AG04450 (cell line): ENCODE measurements at regions of chr1 and their contacts with region 1.

Region 1: DNA sequence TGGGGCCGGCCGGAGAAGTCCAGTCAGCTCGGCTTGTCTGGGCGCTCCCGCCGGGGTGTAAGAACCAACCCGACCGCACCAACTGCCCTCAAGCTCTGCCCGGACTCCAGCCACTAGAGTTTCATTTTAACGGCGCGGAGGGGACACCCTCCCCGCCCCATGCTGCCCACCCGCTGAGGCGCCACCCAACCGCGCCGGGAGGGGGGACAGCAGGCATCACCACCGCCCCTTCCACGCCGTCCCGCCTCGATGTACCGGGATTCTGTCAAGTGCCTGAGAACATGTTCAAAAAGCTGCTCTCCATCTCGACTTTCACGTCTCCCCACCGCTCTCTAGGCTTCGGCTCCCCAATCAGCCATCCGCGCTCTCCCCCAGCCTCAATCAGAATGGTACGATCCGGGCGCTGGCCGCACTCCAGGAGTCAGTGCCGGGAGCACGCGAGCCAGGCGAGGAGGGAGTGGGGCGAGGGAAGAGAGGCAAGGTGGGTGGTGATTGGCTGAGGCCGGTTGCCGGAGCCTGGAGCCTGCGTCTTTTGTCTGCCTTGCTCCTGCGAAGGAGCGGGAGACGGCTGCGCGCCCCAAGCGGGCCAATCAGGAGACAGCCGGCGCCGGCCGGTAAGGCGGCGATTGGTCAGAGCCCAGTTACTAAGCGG is at the start of gene PIK3R3:
- DNase-seq: peak; percentile 99
- H3K4me3 ChIP-seq: peak within 1 kb of the TSS; percentile 80
- H3K27ac ChIP-seq: peak within 1 kb of the TSS; percentile 99
- H3K27me3 ChIP-seq: no peaks in the 10 kb centered on the region
- CTCF ChIP-seq: no peak
- polyA plus RNA-seq, gene PIK3R3: 11.3 and 14.5 TPM in 2 replicates

Region 2: GRCh38 chr1:46186076-46186475 is 53.4 kb after region 1 on chr1:
- CTCF ChIA-PET with region 1: interaction called, 6 read pairs
- POLR2A ChIA-PET with region 1: interaction called, 10 read pairs
- DNase-seq: no peak
- H3K4me3 ChIP-seq: no peak overlapping the region
- H3K27ac ChIP-seq: no peak overlapping the region
- H3K27me3 ChIP-seq: no peaks in the 10 kb centered on the region
- CTCF ChIP-seq: no peak

Region 3: GRCh38 chr1:46549697-46550681 is 417.3 kb after region 1 on chr1:
- CTCF ChIA-PET with region 1: no interaction called
- POLR2A ChIA-PET with region 1: no interaction called
- DNase-seq: no peak
- H3K4me3 ChIP-seq: no peak overlapping the region
- H3K27ac ChIP-seq: no peak overlapping the region
- H3K27me3 ChIP-seq: peaks cover 47% of the 10 kb centered on the region
- CTCF ChIP-seq: no peak